HCT116 (cell line): ENCODE measurements at regions of chr12 and their contacts with region 1.

Region 1: GRCh38 chr12:113424915-113425823 is 3.0 kb downstream of the SDSL start:
- DNase-seq: no peak
- ATAC-seq: peak; percentile 63
- H3K4me3 ChIP-seq: no peak overlapping the region
- H3K27ac ChIP-seq: no peak overlapping the region
- H3K4me1 ChIP-seq: peaks cover 5 to 24% of the 10 kb centered on the region in 2 experiments; a peak in 3 of 4 replicates
- H3K27me3 ChIP-seq: no peaks in the 10 kb centered on the region
- CTCF ChIP-seq: peak; percentile 72 to 95 (median 89)
- POLR2A ChIP-seq: no peak
- RAD21 ChIP-seq: peak; percentile 82

Region 2: GRCh38 chr12:113310489-113310888 is 114.7 kb before region 1 on chr12:
- CTCF ChIA-PET with region 1: interaction called, 3 read pairs
- POLR2A ChIA-PET with region 1: no interaction called
- RAD21 ChIA-PET with region 1: no interaction called
- intact Hi-C with region 1: loop called (anchors 2 kb)
- DNase-seq: no peak
- ATAC-seq: peak; percentile 63
- H3K4me3 ChIP-seq: no peak overlapping the region
- H3K27ac ChIP-seq: no peak overlapping the region
- H3K4me1 ChIP-seq: peaks cover 0 to 7% of the 10 kb centered on the region in 2 experiments; a peak in 2 of 4 replicates
- H3K27me3 ChIP-seq: no peaks in the 10 kb centered on the region
- CTCF ChIP-seq: peak in 2 of 3 experiments; percentile 6 to 18; a peak in 1 of 6 replicates
- POLR2A ChIP-seq: no peak
- RAD21 ChIP-seq: peak; percentile 16; the same call in 1 of the 2 replicates

Region 3: GRCh38 chr12:113462117-113462774 is 37.1 kb after region 1 on chr12:
- CTCF ChIA-PET with region 1: interaction called, 16 read pairs
- POLR2A ChIA-PET with region 1: no interaction called
- RAD21 ChIA-PET with region 1: no interaction called
- intact Hi-C with region 1: no loop called
- DNase-seq: peak; percentile 67
- ATAC-seq: peak; percentile 85
- H3K4me3 ChIP-seq: no peak overlapping the region
- H3K27ac ChIP-seq: no peak overlapping the region
- H3K4me1 ChIP-seq: peaks cover 3 to 11% of the 10 kb centered on the region in 2 experiments; a peak in 3 of 4 replicates
- H3K27me3 ChIP-seq: peaks cover 12% of the 10 kb centered on the region; the same call in 1 of the 2 replicates
- CTCF ChIP-seq: peak; percentile 67 to 87 (median 75)
- POLR2A ChIP-seq: no peak
- RAD21 ChIP-seq: peak; percentile 72